CD8-positive, alpha-beta T cell (primary cell): ENCODE measurements at regions of chr9 and their contacts with region 1.

Region 1: DNA sequence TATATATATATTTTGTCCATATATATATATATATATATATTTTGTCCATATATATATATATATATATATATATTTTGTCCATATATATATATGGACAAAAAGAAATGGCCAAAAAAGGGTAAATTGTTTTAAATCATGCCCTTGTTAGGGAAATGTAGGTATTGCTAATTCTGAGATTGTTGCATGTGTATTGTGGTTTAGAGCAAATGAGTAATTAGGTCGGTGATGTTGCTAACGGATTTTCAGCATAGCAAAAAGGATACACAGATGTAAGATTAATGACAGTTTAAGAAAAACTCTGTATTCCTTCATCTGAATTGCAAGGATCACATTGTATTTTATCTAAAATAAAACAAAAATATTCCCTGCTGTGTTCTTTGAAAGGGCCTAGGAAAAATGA is 40.2 kb downstream of the OSTF1 start:
- DNase-seq: no peak
- ATAC-seq: no peak
- H3K4me3 ChIP-seq: no peak overlapping the region
- H3K4me3 Mint-ChIP-seq: no peak overlapping the region
- H3K27ac ChIP-seq: no peak overlapping the region
- H3K27ac Mint-ChIP-seq: peak overlapping the region; percentile 66
- H3K4me1 ChIP-seq: peaks cover 5% of the 10 kb centered on the region
- H3K4me1 Mint-ChIP-seq: peaks cover 53% of the 10 kb centered on the region
- H3K27me3 ChIP-seq: no peaks in the 10 kb centered on the region
- H3K27me3 Mint-ChIP-seq: no peaks in the 10 kb centered on the region
- CTCF ChIP-seq: no peak

Region 2: GRCh38 chr9:74309654-74310053 is 818.9 kb before region 1 on chr9:
- CTCF ChIA-PET with region 1: no interaction called
- POLR2A ChIA-PET with region 1: no interaction called
- intact Hi-C with region 1: no loop called
- DNase-seq: peak in 2 of 9 experiments; percentile 3 to 12
- ATAC-seq: no peak
- H3K4me3 ChIP-seq: no peak overlapping the region
- H3K4me3 Mint-ChIP-seq: no peak overlapping the region
- H3K27ac ChIP-seq: no peak overlapping the region
- H3K27ac Mint-ChIP-seq: no peak overlapping the region
- H3K4me1 ChIP-seq: no peaks in the 10 kb centered on the region
- H3K4me1 Mint-ChIP-seq: no peaks in the 10 kb centered on the region
- H3K27me3 ChIP-seq: no peaks in the 10 kb centered on the region
- H3K27me3 Mint-ChIP-seq: no peaks in the 10 kb centered on the region
- CTCF ChIP-seq: no peak

Region 3: DNA sequence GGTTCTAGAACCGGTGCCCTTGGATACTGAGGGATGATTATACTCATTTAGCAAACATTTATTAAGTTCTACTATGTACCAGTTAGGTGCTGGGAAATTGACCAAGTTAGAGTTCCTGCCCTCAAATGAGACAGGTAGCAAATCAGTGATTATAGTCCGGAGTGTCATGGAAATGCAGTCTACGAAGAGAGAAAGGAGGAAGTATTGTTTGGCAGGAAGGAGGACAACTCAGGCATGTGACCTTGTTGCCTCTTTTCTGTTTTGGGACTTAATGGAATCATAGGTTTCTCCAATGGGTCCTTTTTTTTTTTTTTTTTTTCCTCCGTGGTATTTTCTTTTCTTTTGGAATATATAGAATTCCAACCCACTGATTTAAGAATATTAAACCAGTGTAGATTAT is 12.2 kb before region 1 on chr9:
- CTCF ChIA-PET with region 1: no interaction called
- POLR2A ChIA-PET with region 1: interaction called, 4 read pairs
- intact Hi-C with region 1: loop called in 1 of 2 experiments (anchors 2 kb)
- DNase-seq: no peak
- ATAC-seq: no peak
- H3K4me3 ChIP-seq: no peak overlapping the region
- H3K4me3 Mint-ChIP-seq: no peak overlapping the region
- H3K27ac ChIP-seq: no peak overlapping the region
- H3K27ac Mint-ChIP-seq: peak overlapping the region; percentile 41
- H3K4me1 ChIP-seq: peaks cover 18% of the 10 kb centered on the region
- H3K4me1 Mint-ChIP-seq: peaks cover 65% of the 10 kb centered on the region
- H3K27me3 ChIP-seq: no peaks in the 10 kb centered on the region
- H3K27me3 Mint-ChIP-seq: no peaks in the 10 kb centered on the region
- CTCF ChIP-seq: no peak

Region 4: DNA sequence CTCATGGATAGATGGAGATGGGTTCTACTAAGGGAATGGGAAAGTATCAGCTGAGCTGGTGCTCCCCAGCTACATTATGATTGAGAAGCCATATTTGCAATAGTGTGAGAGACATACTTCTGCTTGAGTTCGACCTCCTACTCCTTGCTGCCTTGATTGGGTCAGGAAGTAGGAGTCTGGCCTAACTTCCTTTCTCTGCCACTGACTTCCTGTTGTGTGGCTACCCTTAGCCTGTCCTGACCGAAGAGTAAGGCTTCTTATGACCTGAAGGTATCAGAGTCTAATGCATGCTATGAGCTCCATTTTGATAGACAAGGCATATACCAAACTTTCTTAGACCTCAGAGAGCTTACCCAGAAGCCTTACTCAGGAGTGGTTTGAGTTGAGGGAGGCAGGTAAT is 13.7 kb after region 1 on chr9:
- CTCF ChIA-PET with region 1: interaction called, 3 read pairs
- POLR2A ChIA-PET with region 1: no interaction called
- intact Hi-C with region 1: loop called in 1 of 2 experiments (anchors 2 kb)
- DNase-seq: peak in 2 of 9 experiments; percentile 50 to 58
- ATAC-seq: peak; percentile 14
- H3K4me3 ChIP-seq: no peak overlapping the region
- H3K4me3 Mint-ChIP-seq: peak overlapping the region; percentile 35
- H3K27ac ChIP-seq: peak overlapping the region in 1 of 2 experiments; percentile 70
- H3K27ac Mint-ChIP-seq: peak overlapping the region; percentile 86
- H3K4me1 ChIP-seq: peaks cover 59% of the 10 kb centered on the region
- H3K4me1 Mint-ChIP-seq: peaks cover 85% of the 10 kb centered on the region
- H3K27me3 ChIP-seq: no peaks in the 10 kb centered on the region
- H3K27me3 Mint-ChIP-seq: no peaks in the 10 kb centered on the region
- CTCF ChIP-seq: no peak